T-cell (primary cell): ENCODE measurements at regions of chr1 and their contacts with region 1.

Region 1: DNA sequence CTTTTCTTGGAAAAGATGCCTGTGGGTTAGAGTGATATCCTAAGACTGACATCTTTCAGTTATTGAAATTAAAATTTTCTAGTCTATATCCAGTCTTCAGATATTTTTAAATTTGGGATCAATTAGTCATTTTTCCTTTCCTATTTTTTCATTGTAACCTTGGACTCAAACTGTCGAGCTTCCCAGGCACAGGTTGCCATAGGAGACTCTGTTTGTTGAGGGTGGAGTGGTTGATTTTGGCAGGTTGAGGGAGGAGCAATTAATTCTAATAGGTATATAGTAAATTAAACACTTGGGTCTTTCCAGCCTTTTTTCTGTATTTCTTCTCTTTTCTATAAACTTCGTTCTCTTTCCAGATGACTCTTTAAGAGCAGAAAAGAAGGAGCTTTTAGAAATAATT is 326.8 kb downstream of the ASTN1 start:
- DNase-seq: no peak
- ATAC-seq: no peak
- H3K4me3 ChIP-seq: no peak overlapping the region
- H3K4me3 Mint-ChIP-seq: no peak overlapping the region
- H3K27ac ChIP-seq: no peak overlapping the region
- H3K27ac Mint-ChIP-seq: no peak overlapping the region
- H3K4me1 ChIP-seq: no peaks in the 10 kb centered on the region
- H3K4me1 Mint-ChIP-seq: no peaks in the 10 kb centered on the region
- H3K27me3 ChIP-seq: no peaks in the 10 kb centered on the region
- H3K27me3 Mint-ChIP-seq: peaks cover 2 to 13% of the 10 kb centered on the region in 2 donors

Region 2: DNA sequence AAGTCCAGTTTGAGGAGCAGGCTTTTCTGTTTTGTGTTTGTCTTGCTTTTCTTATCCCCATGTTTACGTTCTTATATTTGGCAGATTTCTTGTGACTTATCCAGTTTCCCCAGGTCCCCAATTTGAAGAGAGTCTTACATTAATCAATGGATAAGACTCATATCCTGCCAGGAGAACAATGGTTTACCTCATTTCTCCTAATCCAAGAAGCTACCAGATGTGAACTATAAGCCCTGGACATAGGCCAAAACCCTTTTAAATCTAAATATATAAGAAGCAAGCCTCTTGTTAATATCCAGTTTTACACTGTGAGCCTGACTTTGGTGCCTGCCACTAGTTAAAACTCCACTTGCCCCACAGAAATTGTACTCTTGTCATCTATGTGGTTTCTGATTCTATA is 615.5 kb before region 1 on chr1:
- CTCF ChIA-PET with region 1: no interaction called
- POLR2A ChIA-PET with region 1: no interaction called
- DNase-seq: no peak
- ATAC-seq: no peak
- H3K4me3 ChIP-seq: no peak overlapping the region
- H3K4me3 Mint-ChIP-seq: no peak overlapping the region
- H3K27ac ChIP-seq: no peak overlapping the region
- H3K27ac Mint-ChIP-seq: no peak overlapping the region
- H3K4me1 ChIP-seq: no peaks in the 10 kb centered on the region
- H3K4me1 Mint-ChIP-seq: no peaks in the 10 kb centered on the region
- H3K27me3 ChIP-seq: peaks cover 0 to 5% of the 10 kb centered on the region in 2 experiments
- H3K27me3 Mint-ChIP-seq: peaks cover 2 to 3% of the 10 kb centered on the region in 2 donors

Region 3: DNA sequence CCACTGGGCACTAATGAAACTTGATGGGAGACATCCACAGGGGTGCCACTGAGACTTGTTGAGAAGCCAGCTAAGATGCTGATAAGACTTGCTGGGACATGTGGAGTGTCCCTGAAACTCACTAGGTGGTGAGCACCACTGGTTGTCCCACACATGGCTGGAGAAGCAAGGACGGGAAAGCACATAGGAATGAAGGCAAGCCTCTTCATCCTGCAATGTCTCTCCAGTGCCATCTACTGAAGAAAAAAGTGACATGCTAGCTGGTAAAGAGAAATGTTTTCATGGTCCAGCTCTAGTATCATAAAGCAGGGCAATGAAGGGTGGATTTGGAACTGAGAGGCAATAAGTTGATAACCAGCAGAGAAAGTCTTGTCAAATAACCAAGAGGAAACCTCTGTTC is 91.8 kb before region 1 on chr1:
- CTCF ChIA-PET with region 1: interaction called in 1 of 2 experiments, 11 read pairs
- POLR2A ChIA-PET with region 1: no interaction called
- DNase-seq: no peak
- ATAC-seq: no peak
- H3K4me3 ChIP-seq: no peak overlapping the region
- H3K4me3 Mint-ChIP-seq: no peak overlapping the region
- H3K27ac ChIP-seq: no peak overlapping the region
- H3K27ac Mint-ChIP-seq: no peak overlapping the region
- H3K4me1 ChIP-seq: no peaks in the 10 kb centered on the region
- H3K4me1 Mint-ChIP-seq: no peaks in the 10 kb centered on the region
- H3K27me3 ChIP-seq: no peaks in the 10 kb centered on the region
- H3K27me3 Mint-ChIP-seq: peaks cover 0 to 4% of the 10 kb centered on the region in 2 donors